PC-9 (cell line): ENCODE measurements at regions of chr17 and their contacts with region 1.

Region 1: DNA sequence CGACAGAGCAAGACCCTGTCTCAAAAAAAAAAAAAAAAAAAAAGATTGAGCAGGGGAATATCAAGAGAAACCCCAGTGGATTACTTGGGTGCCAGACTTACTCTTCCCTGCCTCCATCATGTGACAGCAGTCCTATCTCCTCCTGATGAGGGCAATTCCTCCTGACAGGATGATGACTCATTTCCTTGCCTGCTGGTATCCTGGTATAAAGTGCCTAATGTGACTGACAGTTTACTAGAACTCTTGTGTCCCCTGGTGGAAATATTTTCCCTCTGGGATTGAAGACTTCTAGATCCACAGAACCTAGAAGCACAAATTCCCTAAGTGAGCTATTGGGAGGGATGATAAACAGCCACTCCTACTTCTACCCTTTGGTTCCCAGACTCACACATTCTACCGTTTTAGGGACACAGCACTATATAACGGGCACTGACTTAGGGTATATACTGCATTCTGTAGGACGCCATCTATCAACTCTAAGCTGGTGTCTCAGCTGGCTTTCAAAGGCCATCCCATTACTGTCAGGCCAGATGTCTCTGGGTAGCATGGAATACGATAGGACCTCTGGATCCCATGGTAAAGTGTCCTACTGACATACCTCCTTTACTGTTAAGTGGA is 114.6 kb upstream of the MED13 start:
- DNase-seq: peak; percentile 29 to 83
- H3K4me3 ChIP-seq: no peak overlapping the region
- H3K27ac ChIP-seq: peak overlapping the region; percentile 65
- H3K4me1 ChIP-seq: peaks cover 25% of the 10 kb centered on the region
- H3K27me3 ChIP-seq: no peaks in the 10 kb centered on the region
- CTCF ChIP-seq: peak; percentile 55; the same call in 1 of the 2 replicates

Region 2: DNA sequence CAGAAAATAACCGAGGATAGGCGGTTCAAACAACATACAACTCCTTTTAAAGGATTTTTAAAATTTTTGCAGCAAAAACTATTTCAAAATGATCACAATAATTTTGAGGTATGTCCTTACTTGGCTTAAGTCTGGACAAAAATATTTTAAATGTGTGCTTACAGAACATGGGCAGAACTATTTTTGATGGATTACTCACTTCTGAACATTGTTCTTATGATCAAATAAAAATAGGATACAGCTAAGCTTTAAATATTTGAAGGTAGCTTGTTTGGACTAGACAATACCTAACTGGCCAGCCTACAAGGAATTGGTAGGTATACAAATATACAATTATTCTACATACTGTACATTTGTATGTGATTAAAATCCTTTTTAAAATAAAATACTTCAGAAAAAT is 237.6 kb before region 1 on chr17:
- CTCF ChIA-PET with region 1: interaction called, 18 read pairs
- POLR2A ChIA-PET with region 1: no interaction called
- intact Hi-C with region 1: no loop called
- DNase-seq: no peak
- H3K4me3 ChIP-seq: no peak overlapping the region
- H3K27ac ChIP-seq: no peak overlapping the region
- H3K4me1 ChIP-seq: no peaks in the 10 kb centered on the region
- H3K27me3 ChIP-seq: no peaks in the 10 kb centered on the region
- CTCF ChIP-seq: no peak